T-cell (primary cell): ENCODE measurements at regions of chr17 and their contacts with region 1.

Region 1: DNA sequence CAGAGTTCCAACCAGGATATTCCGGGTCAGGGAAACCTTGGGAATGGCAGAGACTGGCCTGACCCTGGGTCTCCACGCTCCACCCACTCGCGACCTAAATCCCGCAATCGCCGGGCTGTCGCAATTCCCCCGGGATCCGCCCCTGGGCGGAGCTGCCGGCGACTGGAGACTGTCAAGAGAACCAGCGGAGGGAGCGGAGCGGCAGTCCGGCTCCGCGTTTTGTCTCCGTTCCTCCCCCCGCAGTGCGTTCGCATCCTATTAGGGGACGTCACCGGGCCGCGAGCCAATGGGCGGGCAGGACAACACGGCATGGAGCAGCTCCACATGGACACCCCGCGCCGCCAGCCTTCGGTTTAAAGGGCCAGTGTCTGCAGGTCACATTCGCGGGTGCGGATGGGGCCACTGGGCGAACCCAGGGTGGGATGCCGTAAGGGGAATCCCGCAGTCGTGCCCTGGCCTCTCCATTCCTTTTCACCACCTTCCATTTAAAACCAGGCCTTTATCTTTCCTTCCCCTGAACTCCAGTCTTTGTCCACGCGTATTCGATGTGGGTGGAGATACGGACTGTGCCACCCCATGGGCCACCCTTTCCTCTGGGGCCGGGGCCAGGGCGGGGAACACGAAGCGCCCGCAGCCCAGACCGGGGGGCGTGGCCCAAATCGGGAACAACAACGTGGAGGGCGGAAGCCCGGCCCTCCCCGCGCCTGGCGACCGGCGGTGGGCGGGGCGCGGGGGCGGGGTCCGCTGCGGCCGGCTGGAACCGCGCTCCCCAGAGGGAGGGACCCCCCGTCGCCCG is 764 bp upstream of the MNT start:
- DNase-seq: peak; percentile 98 to 100 (median 99)
- ATAC-seq: peak; percentile 62 to 69 (median 64)
- H3K4me3 ChIP-seq: peak overlapping the region; percentile 77 to 85
- H3K4me3 Mint-ChIP-seq: peak overlapping the region; percentile 87 to 99 (median 94)
- H3K27ac ChIP-seq: peak overlapping the region; percentile 99
- H3K27ac Mint-ChIP-seq: peak overlapping the region; percentile 96 to 99
- H3K4me1 ChIP-seq: peaks cover 16 to 47% of the 10 kb centered on the region in 2 experiments
- H3K4me1 Mint-ChIP-seq: peaks cover 34 to 58% (median 46%) of the 10 kb centered on the region in 3 donors
- H3K27me3 ChIP-seq: no peaks in the 10 kb centered on the region
- H3K27me3 Mint-ChIP-seq: no peaks in the 10 kb centered on the region

Region 2: GRCh38 chr17:2386400-2387085 is 15.1 kb before region 1 on chr17:
- CTCF ChIA-PET with region 1: interaction called in 1 of 2 experiments, 11 read pairs
- POLR2A ChIA-PET with region 1: interaction called, 3 to 4 read pairs
- DNase-seq: no peak
- ATAC-seq: no peak
- H3K4me3 ChIP-seq: no peak overlapping the region
- H3K4me3 Mint-ChIP-seq: no peak overlapping the region
- H3K27ac ChIP-seq: no peak overlapping the region
- H3K27ac Mint-ChIP-seq: peak overlapping the region in 1 of 2 donors; percentile 11
- H3K4me1 ChIP-seq: peaks cover 4 to 38% of the 10 kb centered on the region in 2 experiments
- H3K4me1 Mint-ChIP-seq: peaks cover 26 to 36% (median 33%) of the 10 kb centered on the region in 3 donors
- H3K27me3 ChIP-seq: no peaks in the 10 kb centered on the region
- H3K27me3 Mint-ChIP-seq: no peaks in the 10 kb centered on the region

Region 3: DNA sequence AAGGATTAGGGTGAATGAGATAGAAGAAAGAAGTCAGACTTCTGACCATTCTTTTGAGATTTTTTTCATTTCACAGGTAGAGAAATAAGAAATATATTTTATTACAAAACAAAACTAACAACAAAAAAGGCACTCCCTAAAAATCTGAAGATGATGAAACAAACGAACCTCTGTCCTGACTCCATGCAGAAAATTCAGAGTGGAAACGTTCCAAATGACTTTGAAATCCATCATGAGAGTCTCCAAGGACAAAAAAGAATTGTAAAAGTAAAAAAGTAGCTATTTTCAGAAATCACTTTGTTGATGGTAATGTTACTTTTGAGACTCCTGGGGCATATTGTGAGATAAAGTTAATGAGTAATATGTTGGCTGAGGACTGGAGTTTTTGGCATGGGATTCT is 25.6 kb after region 1 on chr17:
- CTCF ChIA-PET with region 1: no interaction called
- POLR2A ChIA-PET with region 1: no interaction called
- DNase-seq: no peak
- ATAC-seq: no peak
- H3K4me3 ChIP-seq: no peak overlapping the region
- H3K4me3 Mint-ChIP-seq: no peak overlapping the region
- H3K27ac ChIP-seq: no peak overlapping the region
- H3K27ac Mint-ChIP-seq: no peak overlapping the region
- H3K4me1 ChIP-seq: no peaks in the 10 kb centered on the region
- H3K4me1 Mint-ChIP-seq: no peaks in the 10 kb centered on the region
- H3K27me3 ChIP-seq: no peaks in the 10 kb centered on the region
- H3K27me3 Mint-ChIP-seq: no peaks in the 10 kb centered on the region

Region 4: DNA sequence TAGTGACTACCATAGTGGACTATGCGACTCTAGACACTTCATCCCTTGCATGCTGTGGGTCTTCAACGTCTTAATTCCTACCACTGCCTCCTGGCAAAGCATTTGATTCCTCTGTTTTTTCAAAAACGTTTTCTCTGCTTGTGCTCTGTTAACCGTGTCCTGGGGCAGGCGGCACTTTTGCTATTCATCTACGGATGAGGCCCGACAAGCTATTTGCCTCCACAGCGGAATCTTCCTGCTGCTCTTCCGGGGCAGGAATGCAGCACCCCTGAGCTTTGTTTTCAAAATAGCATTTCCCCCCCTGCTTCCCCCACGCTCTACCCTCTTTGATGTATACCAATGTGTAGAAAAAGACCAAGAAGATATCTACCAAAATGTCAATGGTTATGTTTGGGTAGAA is 149.9 kb after region 1 on chr17:
- CTCF ChIA-PET with region 1: no interaction called
- POLR2A ChIA-PET with region 1: interaction called in 1 of 2 experiments, 10 read pairs
- DNase-seq: no peak
- ATAC-seq: no peak
- H3K4me3 ChIP-seq: no peak overlapping the region
- H3K4me3 Mint-ChIP-seq: no peak overlapping the region
- H3K27ac ChIP-seq: no peak overlapping the region
- H3K27ac Mint-ChIP-seq: no peak overlapping the region
- H3K4me1 ChIP-seq: no peaks in the 10 kb centered on the region
- H3K4me1 Mint-ChIP-seq: peaks cover 0 to 8% (median 3%) of the 10 kb centered on the region in 3 donors
- H3K27me3 ChIP-seq: peaks cover 0 to 20% of the 10 kb centered on the region in 2 experiments
- H3K27me3 Mint-ChIP-seq: peaks cover 0 to 2% of the 10 kb centered on the region in 2 donors